ENCODE measurements at regions of chr3 and their contacts with region 1.

Region 1: DNA sequence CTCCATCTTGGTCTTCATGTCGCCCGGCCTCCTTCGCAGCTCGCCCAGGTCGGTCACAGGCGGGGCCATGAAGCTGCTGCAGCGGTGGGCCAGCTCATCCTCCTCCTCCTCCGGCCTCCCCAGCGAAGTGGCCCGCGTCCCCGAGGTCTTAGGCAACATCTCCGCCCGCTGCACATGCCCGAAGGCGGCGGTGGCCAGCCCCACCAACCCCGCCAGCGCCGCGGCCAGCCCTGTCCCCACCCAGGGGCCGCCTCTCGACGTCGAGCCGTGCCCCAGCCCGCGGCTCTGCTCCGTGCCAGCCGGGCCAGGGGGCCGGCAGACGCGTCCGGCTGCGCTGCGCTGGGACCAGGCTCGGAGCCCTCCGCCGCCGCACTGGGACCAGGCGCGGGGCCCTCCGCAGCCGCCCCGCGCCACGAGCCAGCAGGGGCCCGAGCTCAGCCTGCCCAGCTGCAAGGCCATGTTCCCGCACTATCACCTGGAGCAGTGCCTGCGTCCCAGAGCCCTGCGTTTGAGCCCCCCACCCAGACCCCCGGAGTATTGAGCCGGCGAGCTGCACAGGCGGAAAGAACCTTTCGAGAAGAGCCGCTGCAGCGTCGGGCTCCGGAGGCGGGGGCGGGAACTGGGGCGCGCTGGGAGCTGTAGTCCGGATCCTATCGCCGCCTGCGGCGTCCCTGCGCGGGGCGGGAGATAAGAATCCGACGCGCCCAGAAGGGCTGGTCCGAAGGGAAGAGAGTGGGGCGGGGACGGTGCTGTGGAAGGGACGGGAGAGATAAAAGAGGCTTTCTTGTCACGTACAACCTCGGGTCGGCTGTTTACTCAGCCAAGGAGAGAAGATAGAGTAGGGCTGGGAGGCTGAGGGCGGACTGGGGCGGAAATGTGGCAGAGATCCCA is at the start of gene CPOX:
- DNase-seq: peak; percentile 45
- H3K4me3 ChIP-seq: peak within 1 kb of the TSS; percentile 83
- CTCF ChIP-seq: no peak

Region 2: DNA sequence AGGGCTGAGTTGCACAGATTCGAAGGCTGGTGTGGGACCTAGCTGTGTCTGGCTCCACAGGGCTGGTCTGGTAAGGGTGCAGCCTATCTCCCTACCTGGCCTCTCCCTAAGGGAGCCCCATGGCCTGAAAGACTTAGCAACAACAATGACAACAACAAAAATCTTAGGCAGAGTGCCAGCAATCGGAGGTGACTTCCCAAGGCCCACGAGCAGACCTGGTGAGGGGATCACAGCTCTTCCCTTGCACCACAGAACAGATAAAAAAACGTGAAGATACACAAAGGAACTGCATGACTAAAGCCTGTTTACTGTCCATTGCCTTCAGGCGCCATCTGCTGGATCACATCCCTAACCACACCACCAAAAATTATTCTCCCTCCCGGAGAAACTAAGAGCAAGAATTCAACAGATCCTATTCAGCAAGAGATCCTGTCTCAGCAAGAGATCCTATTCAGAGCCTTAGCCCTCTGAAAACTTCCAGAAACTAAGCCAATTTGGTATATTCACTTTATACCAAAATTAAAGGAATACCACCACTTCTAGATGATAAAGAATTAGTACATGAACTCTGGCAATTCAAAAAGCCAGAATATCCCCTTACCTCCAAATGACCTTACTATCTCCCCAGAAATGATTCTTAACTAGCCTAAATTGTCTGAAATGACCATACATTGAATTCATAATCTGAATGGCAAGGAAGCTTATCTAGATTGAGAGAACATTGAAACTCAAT is 263.7 kb before region 1 on chr3:
- CTCF ChIA-PET with region 1: interaction called, 10 read pairs
- POLR2A ChIA-PET with region 1: no interaction called
- DNase-seq: no peak
- H3K4me3 ChIP-seq: no peak overlapping the region
- CTCF ChIP-seq: peak; percentile 67

Region 3: DNA sequence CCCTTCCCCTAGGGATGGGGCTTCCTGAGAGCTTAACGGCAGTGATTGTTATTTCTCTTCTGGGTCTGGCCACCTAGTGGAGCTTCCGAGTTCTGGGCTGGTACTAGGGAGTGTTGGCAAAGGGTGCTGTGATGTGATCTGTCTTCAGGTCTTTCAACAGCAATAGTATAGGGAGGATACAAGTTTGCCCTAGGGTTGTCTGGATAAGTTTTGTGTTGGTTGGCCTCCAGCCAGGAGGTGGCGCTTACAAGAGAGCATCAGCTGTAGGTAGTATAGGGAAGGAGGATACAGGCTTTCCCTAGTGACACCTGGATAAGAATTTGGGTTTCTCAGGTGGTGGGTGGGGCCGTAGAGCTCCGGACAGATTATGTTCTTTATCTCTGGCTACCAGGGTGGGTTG is 19.3 kb after region 1 on chr3:
- CTCF ChIA-PET with region 1: interaction called, 13 read pairs
- POLR2A ChIA-PET with region 1: no interaction called
- DNase-seq: no peak
- H3K4me3 ChIP-seq: no peak overlapping the region
- CTCF ChIP-seq: no peak

Region 4: DNA sequence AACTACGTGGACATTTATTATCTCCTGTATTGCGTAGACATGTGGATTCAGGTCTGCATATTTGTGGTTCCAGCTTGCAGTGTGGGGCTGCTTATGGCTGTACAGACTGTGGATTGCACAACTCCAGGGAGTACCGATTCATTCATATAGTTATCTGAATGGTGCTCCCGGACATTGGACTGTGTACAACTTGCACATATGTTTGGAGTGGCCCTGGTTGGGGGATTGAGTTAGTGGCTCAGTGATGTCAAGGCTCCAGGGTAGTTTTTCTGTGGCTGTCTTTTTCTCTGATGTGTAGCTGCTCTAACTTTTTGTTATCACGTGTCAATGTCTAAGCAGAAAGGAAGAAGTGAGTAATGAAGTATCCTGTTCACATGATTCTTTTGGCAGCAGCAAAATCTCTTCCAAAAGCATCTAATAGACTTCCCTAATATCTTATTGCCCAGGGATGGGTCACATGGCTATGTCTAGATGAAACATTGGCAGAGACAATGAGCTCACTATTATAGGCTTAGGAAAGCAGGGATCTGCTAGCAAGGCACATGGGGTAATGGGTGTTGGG is 185.6 kb after region 1 on chr3:
- CTCF ChIA-PET with region 1: interaction called, 16 read pairs
- POLR2A ChIA-PET with region 1: no interaction called
- DNase-seq: peak; percentile 89
- H3K4me3 ChIP-seq: no peak overlapping the region
- CTCF ChIP-seq: no peak

Region 5: GRCh38 chr3:98798820-98799219 is 205.5 kb after region 1 on chr3:
- CTCF ChIA-PET with region 1: interaction called, 24 read pairs
- POLR2A ChIA-PET with region 1: no interaction called
- DNase-seq: no peak
- H3K4me3 ChIP-seq: no peak overlapping the region
- CTCF ChIP-seq: no peak

Region 6: DNA sequence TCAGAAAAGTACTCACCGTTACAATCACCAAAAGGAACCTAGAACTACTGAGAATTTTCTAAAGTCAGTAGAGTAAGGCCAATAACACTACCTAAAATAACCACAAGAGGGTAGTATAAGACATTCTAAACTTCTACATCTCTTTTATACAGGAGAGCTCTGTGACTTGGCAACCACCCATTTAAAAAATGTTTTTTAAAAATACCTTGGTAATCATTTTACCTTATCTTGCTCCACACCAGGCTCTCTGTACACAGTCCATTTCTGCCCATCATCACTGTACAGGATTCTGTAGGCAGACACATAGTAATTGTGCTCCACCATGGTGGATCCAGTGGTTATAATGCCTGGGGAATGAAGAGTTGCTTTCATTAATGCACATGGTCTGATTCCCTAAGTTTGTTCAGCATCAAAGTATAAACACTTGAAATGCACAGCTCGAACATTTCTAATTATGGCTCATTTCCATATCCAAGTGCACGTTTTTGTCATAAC is 224.3 kb after region 1 on chr3:
- CTCF ChIA-PET with region 1: interaction called, 153 read pairs
- POLR2A ChIA-PET with region 1: no interaction called
- DNase-seq: no peak
- H3K4me3 ChIP-seq: no peak overlapping the region
- CTCF ChIP-seq: peak; percentile 10

Measured in AG04449 (cell line).